Posterior cingulate gyrus (tissue), 11 donors: ENCODE measurements at regions of chr2 and their contacts with region 1.

Region 1: GRCh38 chr2:47309952-47310800 is 92.8 kb upstream of the MSH2 start:
- DNase-seq: peak in 4 of 10 donors; percentile 26 to 84 (median 44)

Region 2: DNA sequence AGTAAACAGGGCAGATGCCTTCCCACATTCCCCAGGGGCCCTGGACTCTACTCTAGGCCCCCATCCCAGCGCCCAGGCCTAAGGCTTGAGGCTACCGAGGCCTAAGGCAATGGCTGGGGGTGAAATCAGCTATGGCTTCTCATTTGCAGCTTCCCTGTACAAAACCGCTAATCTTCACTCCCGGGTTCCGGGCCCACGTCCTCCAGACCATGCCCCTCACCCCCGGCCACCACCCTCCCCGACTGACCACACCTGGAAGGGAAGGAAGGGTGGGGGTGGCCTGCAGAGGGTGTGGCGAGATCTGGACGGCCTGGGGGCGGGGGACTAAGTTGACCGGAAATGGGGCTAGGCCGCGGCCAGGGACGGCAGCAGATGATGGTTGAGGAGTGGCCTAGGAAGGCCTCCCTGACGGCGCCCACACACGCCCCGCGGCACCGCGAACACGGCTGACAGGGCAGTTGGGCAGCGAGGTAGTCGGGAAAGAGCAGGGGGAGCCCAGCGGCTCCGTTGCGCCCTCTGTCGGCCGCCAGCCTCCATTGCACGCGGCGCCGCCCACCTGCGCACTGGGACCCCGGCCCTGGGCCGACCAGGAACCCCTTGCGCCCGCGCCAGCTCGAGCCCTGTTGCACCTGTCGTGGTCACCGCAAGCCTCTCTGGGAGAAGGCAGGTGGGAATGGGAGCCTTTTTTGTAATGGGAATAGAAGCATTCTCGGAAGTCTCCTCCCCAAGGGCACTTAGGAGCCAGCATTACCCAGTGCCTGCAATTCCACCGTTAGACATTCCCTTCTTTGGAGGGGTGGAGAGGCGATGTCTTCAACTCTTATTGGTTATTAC is 37.9 kb before region 1 on chr2:
- intact Hi-C with region 1: loop called (anchors 5 kb)
- DNase-seq: peak; percentile 34 to 94 (median 64)

Region 3: GRCh38 chr2:47471429-47472116 is 161.4 kb after region 1 on chr2:
- intact Hi-C with region 1: no loop called
- DNase-seq: no peak